WTC11 (cell line): ENCODE measurements at regions of chr7 and their contacts with region 1.

Region 1: DNA sequence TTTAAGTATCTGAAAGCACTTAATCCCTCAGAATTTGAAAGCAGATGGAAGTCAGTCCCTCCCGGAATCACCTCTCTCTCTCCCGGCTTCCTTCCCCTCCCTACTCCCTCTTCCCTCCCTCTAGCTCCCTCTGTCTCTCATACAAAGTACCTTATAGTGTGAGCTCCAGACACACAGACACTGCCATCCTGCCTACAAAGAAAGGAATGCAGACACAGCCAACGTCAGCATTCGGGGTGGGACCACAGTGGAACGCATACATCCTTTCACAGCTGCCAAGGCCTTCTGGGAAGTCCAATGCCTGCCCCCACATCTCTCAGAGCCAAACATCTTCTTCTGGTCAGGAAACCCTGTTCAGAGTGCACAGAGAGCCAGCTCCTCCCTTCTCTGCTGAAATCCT is 9.3 kb downstream of the NOD1 start:
- DNase-seq: peak; percentile 68
- ATAC-seq: peak; percentile 99
- H3K4me3 Mint-ChIP-seq: peak overlapping the region; percentile 19; the same call in 1 of the 2 replicates
- H3K27ac Mint-ChIP-seq: peak overlapping the region; percentile 67
- H3K4me1 Mint-ChIP-seq: peaks cover 21% of the 10 kb centered on the region
- H3K27me3 Mint-ChIP-seq: no peaks in the 10 kb centered on the region
- CTCF ChIP-seq: no peak

Region 2: DNA sequence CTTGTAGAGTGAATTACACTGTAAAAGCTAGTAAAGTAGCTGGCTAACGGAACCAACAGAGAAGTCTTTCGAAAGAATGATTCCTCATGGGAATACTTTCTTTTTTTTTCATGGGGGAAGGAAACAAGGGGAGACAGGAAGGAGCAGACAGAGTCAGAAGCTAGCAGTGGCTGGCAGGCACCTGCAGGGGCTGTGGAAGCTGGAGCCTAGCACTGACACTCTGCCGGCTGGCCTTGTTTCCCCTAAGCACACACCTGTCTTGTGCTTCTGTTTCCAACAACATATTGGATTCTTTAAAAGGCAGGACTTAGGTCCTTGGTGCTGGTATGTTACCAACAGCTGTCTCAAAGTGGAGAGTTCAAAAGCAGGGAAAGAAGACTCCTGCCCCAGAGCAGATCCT is 15.4 kb before region 1 on chr7:
- CTCF ChIA-PET with region 1: interaction called, 12 read pairs
- POLR2A ChIA-PET with region 1: no interaction called
- DNase-seq: no peak
- ATAC-seq: peak; percentile 14; the same call in 1 of the 2 replicates
- H3K4me3 Mint-ChIP-seq: no peak overlapping the region
- H3K27ac Mint-ChIP-seq: no peak overlapping the region
- H3K4me1 Mint-ChIP-seq: peaks cover 22% of the 10 kb centered on the region
- H3K27me3 Mint-ChIP-seq: no peaks in the 10 kb centered on the region
- CTCF ChIP-seq: no peak

Region 3: GRCh38 chr7:30702200-30702599 is 232.9 kb after region 1 on chr7:
- CTCF ChIA-PET with region 1: no interaction called
- POLR2A ChIA-PET with region 1: no interaction called
- DNase-seq: no peak
- ATAC-seq: peak; percentile 13; the same call in 1 of the 2 replicates
- H3K4me3 Mint-ChIP-seq: no peak overlapping the region
- H3K27ac Mint-ChIP-seq: no peak overlapping the region
- H3K4me1 Mint-ChIP-seq: peaks cover 22% of the 10 kb centered on the region
- H3K27me3 Mint-ChIP-seq: peaks cover 5% of the 10 kb centered on the region
- CTCF ChIP-seq: 0 out of 2 replicates have a peak, but pooled peaks have one; percentile 22